ENCODE measurements at regions of chrX and their contacts with region 1.

Region 1: GRCh38 chrX:49884290-49884862 is 5.1 kb downstream of the USP27X start:
- DNase-seq: peak; percentile 68
- H3K4me3 Mint-ChIP-seq: no peak overlapping the region
- H3K27ac Mint-ChIP-seq: no peak overlapping the region
- H3K4me1 Mint-ChIP-seq: peaks cover 14% of the 10 kb centered on the region
- H3K27me3 Mint-ChIP-seq: no peaks in the 10 kb centered on the region

Region 2: GRCh38 chrX:49922291-49923241 is 38.2 kb after region 1 on chrX and contains the start of gene CLCN5:
- CTCF ChIA-PET with region 1: interaction called, 62 read pairs
- DNase-seq: peak; percentile 96
- H3K4me3 Mint-ChIP-seq: peak within 1 kb of the TSS; percentile 74
- H3K27ac Mint-ChIP-seq: peak within 1 kb of the TSS; percentile 73
- H3K4me1 Mint-ChIP-seq: peaks cover 15% of the 10 kb centered on the region
- H3K27me3 Mint-ChIP-seq: no peaks in the 10 kb centered on the region

Region 3: GRCh38 chrX:49978176-49978575 is 93.8 kb after region 1 on chrX:
- CTCF ChIA-PET with region 1: no interaction called
- DNase-seq: no peak
- H3K4me3 Mint-ChIP-seq: no peak overlapping the region
- H3K27ac Mint-ChIP-seq: no peak overlapping the region
- H3K4me1 Mint-ChIP-seq: no peaks in the 10 kb centered on the region
- H3K27me3 Mint-ChIP-seq: no peaks in the 10 kb centered on the region

Measured in activated naive CD4-positive, alpha-beta T cell treated with anti-CD3 and anti-CD28 coated beads, Interleukin-2, amount 10 ng/mL, durations not matched to agents 7 days and 5 days (primary cell).